Heart right ventricle (tissue), 16 donors: ENCODE measurements at regions of chr2 and their contacts with region 1.

Region 1: GRCh38 chr2:164717000-164717803 is 95.9 kb upstream of the GRB14 start:
- DNase-seq: no peak
- ATAC-seq: no peak
- H3K4me3 ChIP-seq: no peak overlapping the region
- H3K27ac ChIP-seq: no peak overlapping the region
- H3K4me1 ChIP-seq: peaks cover 0 to 21% (median 4%) of the 10 kb centered on the region in 9 donors
- H3K27me3 ChIP-seq: no peaks in the 10 kb centered on the region
- CTCF ChIP-seq: peak; percentile 43 to 72 (median 64)

Region 2: GRCh38 chr2:163155279-163155883 is 1561.8 kb before region 1 on chr2:
- intact Hi-C with region 1: loop called in 1 of 10 experiments (anchors 10 kb)
- DNase-seq: no peak
- ATAC-seq: no peak
- H3K4me3 ChIP-seq: no peak overlapping the region
- H3K27ac ChIP-seq: no peak overlapping the region
- H3K4me1 ChIP-seq: no peaks in the 10 kb centered on the region
- H3K27me3 ChIP-seq: peaks cover 0 to 4% (median 0%) of the 10 kb centered on the region in 7 donors
- CTCF ChIP-seq: peak; percentile 24 to 67 (median 55)

Region 3: DNA sequence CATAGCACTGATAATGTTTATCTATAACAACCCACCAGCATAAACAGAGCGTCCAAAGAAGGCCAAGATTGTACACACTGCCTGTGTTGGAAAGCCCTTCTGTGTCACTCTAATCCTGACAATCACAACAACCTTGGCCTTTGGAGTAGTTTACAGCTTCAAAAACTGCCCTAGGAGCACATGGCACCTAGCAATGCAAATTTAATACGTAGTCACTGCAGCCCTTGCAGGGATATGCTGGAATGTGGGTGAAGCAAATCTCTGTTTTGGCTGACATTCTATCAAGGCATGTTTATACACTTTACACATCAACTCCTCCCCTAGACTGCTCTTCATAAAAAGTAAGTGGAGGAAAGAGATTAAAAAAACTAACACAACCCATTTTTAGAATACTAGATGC is 162.7 kb before region 1 on chr2:
- intact Hi-C with region 1: loop called in 4 of 10 experiments (anchors 1 to 10 kb)
- DNase-seq: no peak
- ATAC-seq: no peak
- H3K4me3 ChIP-seq: no peak overlapping the region
- H3K27ac ChIP-seq: no peak overlapping the region
- H3K4me1 ChIP-seq: peaks cover 0 to 6% (median 0%) of the 10 kb centered on the region in 9 donors
- H3K27me3 ChIP-seq: no peaks in the 10 kb centered on the region
- CTCF ChIP-seq: no peak